Calu3 (cell line): ENCODE measurements at regions of chr12 and their contacts with region 1.

Region 1: DNA sequence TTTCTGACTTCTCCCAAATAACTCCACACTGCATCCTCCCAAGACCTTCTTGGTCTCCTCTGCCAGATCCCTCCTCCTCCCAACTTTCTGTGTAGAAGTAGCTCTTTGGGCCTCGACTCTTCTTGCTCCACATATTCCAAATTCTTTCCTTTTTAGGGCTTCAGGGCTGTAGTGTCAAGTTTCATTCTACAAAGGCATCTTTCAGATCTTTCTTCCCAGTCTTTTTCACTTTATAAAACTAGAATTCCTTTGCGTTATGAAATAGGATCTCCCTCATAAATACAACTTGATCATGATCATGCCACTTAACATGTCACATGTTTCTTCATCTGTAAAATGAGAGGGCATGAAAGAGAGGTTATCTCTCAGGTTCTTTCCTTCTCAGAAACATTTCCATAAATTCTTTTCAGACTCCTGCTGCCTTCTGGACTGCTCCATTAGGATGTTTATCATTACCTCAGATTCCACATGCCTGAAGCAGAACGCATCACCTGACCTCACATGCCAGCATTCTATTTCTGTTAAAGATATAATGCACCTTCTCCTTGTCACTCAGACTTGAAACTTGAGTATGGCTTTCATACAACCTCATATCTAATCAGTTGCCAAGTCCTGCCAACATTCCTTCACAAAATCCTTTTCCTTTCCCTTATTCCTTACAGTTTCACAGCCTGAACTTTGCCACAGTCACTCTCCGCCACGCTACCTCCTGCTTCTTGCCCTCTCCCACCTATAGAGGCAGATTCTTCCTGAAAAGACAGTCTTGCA is 8.5 kb downstream of the SLC38A1 start:
- DNase-seq: no peak
- H3K4me3 Mint-ChIP-seq: no peak overlapping the region
- H3K27ac Mint-ChIP-seq: no peak overlapping the region
- H3K4me1 Mint-ChIP-seq: peaks cover 25% of the 10 kb centered on the region
- H3K27me3 Mint-ChIP-seq: no peaks in the 10 kb centered on the region
- CTCF ChIP-seq: no peak

Region 2: GRCh38 chr12:46209914-46210872 is 50.1 kb before region 1 on chr12:
- CTCF ChIA-PET with region 1: no interaction called
- intact Hi-C with region 1: loop called (anchors 5 kb)
- DNase-seq: peak; percentile 59
- H3K4me3 Mint-ChIP-seq: peak overlapping the region; percentile 37
- H3K27ac Mint-ChIP-seq: peak overlapping the region; percentile 85
- H3K4me1 Mint-ChIP-seq: peaks cover 25% of the 10 kb centered on the region
- H3K27me3 Mint-ChIP-seq: no peaks in the 10 kb centered on the region
- CTCF ChIP-seq: no peak

Region 3: GRCh38 chr12:46227616-46228015 is 32.7 kb before region 1 on chr12:
- CTCF ChIA-PET with region 1: no interaction called
- intact Hi-C with region 1: loop called (anchors 5 kb)
- DNase-seq: no peak
- H3K4me3 Mint-ChIP-seq: no peak overlapping the region
- H3K27ac Mint-ChIP-seq: no peak overlapping the region
- H3K4me1 Mint-ChIP-seq: peaks cover 9% of the 10 kb centered on the region
- H3K27me3 Mint-ChIP-seq: no peaks in the 10 kb centered on the region
- CTCF ChIP-seq: no peak